Left colon (tissue), 2 donors: ENCODE measurements at regions of chr17 and their contacts with region 1.

Region 1: GRCh38 chr17:36545465-36546417 is 1.0 kb downstream of the GGNBP2 start:
- DNase-seq: peak; percentile 96 to 97
- ATAC-seq: peak; percentile 77

Region 2: GRCh38 chr17:36591434-36592315 is 45.9 kb after region 1 on chr17 and contains the start of gene DHRS11:
- intact Hi-C with region 1: loop called in 1 of 2 experiments (anchors 5 kb)
- DNase-seq: peak; percentile 83 to 90
- ATAC-seq: peak; percentile 74
- total RNA-seq, gene DHRS11: 221 to 249 TPM